ENCODE measurements at regions of chr5 and their contacts with region 1.

Region 1: GRCh38 chr5:146426853-146427618 is 20.1 kb upstream of the TCERG1 start:
- DNase-seq: no peak

Region 2: GRCh38 chr5:146176805-146177204 is 250.2 kb before region 1 on chr5:
- intact Hi-C with region 1: loop called in 1 of 2 experiments (anchors 2 kb)
- DNase-seq: no peak

Region 3: GRCh38 chr5:146291421-146292074 is 135.5 kb before region 1 on chr5:
- intact Hi-C with region 1: loop called (anchors 10 kb)
- DNase-seq: no peak

Measured in posterior vena cava (tissue), 2 donors.